ENCODE measurements at regions of chr6 and their contacts with region 1.

Region 1: GRCh38 chr6:158072083-158072721 is 90.5 kb downstream of the SYNJ2 start:
- DNase-seq: peak; percentile 71
- H3K4me3 Mint-ChIP-seq: no peak overlapping the region
- H3K27ac Mint-ChIP-seq: no peak overlapping the region
- H3K4me1 Mint-ChIP-seq: peaks cover 20% of the 10 kb centered on the region
- H3K27me3 Mint-ChIP-seq: no peaks in the 10 kb centered on the region
- CTCF ChIP-seq: peak; percentile 79

Region 2: GRCh38 chr6:157667211-157668008 is 404.8 kb before region 1 on chr6:
- CTCF ChIA-PET with region 1: interaction called, 5 read pairs
- POLR2A ChIA-PET with region 1: no interaction called
- intact Hi-C with region 1: loop called (anchors 1 kb)
- DNase-seq: peak; percentile 80
- H3K4me3 Mint-ChIP-seq: peak overlapping the region; percentile 1
- H3K27ac Mint-ChIP-seq: peak overlapping the region; percentile 78
- H3K4me1 Mint-ChIP-seq: peaks cover 22% of the 10 kb centered on the region
- H3K27me3 Mint-ChIP-seq: no peaks in the 10 kb centered on the region
- CTCF ChIP-seq: peak; percentile 78

Region 3: GRCh38 chr6:157912326-157912725 is 159.9 kb before region 1 on chr6:
- CTCF ChIA-PET with region 1: interaction called, 5 read pairs
- POLR2A ChIA-PET with region 1: no interaction called
- intact Hi-C with region 1: loop called (anchors 10 kb)
- DNase-seq: peak; percentile 26
- H3K4me3 Mint-ChIP-seq: no peak overlapping the region
- H3K27ac Mint-ChIP-seq: no peak overlapping the region
- H3K4me1 Mint-ChIP-seq: peaks cover 5% of the 10 kb centered on the region
- H3K27me3 Mint-ChIP-seq: no peaks in the 10 kb centered on the region
- CTCF ChIP-seq: no peak

Region 4: GRCh38 chr6:157981395-157982296 is 90.6 kb before region 1 on chr6 and contains the start of gene SYNJ2:
- CTCF ChIA-PET with region 1: interaction called, 18 read pairs
- POLR2A ChIA-PET with region 1: interaction called, 5 read pairs
- intact Hi-C with region 1: loop called (anchors 1 kb)
- DNase-seq: peak; percentile 72
- H3K4me3 Mint-ChIP-seq: peak within 1 kb of the TSS; percentile 72
- H3K27ac Mint-ChIP-seq: peak within 1 kb of the TSS; percentile 11
- H3K4me1 Mint-ChIP-seq: no peaks in the 10 kb centered on the region
- H3K27me3 Mint-ChIP-seq: no peaks in the 10 kb centered on the region
- CTCF ChIP-seq: peak; percentile 32
- total RNA-seq, gene SYNJ2: 8.9 and 10.3 TPM in 2 replicates

Region 5: DNA sequence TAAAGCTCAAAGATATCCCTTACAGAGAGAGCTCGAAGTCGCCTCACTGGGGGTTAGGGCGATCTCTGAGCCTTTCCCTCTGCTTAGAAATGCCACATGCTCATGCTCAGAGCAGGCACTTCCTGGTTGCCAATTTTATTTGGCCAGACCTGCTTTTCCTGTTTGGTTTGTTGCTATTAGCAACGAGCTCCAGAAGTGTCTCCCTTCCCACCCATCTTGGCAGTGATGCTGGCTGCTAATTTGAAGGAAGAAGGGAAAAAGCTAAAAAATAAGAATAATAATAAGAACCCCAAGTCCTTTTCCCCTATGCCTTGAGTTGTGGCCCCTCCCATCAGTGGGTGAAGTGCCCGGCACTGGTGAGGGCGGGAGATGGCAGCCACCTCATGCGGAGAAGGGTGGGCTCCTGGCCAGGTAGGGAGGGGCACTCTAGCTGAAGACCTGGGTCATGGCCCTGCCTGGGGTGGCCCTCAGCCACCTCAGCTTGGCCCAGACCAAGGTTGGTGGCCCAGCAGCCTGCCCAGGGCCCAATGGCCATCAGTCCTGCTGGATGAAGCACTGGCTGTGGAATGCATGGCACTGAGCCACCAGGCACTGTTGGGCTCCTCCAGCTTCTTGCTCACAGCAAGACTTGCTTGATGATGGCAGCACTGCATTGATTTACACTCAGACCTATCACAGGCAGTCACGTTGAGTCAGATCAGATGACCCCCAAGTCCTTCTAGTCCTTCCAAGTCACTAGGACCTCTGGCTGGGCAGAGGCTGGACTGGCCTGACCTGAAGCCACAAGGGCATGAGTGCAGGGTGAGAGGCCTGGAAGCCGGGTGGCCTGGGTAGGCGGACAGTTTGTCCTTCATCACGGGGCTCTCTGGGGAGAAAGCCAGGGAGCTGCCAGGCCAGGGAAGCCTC is 11.5 kb before region 1 on chr6:
- CTCF ChIA-PET with region 1: interaction called, 31 read pairs
- POLR2A ChIA-PET with region 1: interaction called, 11 read pairs
- intact Hi-C with region 1: no loop called
- DNase-seq: peak; percentile 71
- H3K4me3 Mint-ChIP-seq: no peak overlapping the region
- H3K27ac Mint-ChIP-seq: peak overlapping the region; percentile 71
- H3K4me1 Mint-ChIP-seq: peaks cover 12% of the 10 kb centered on the region
- H3K27me3 Mint-ChIP-seq: no peaks in the 10 kb centered on the region
- CTCF ChIP-seq: no peak